HepG2 (cell line): ENCODE measurements at regions of chr2 and their contacts with region 1.

Region 1: GRCh38 chr2:64750817-64751285 is 97.1 kb upstream of the SERTAD2 start:
- DNase-seq: peak; percentile 99
- ATAC-seq: peak; percentile 92
- H3K4me3 ChIP-seq: peak overlapping the region; percentile 80 to 93 (median 89)
- H3K27ac ChIP-seq: peak overlapping the region; percentile 80
- H3K4me1 ChIP-seq: peaks cover 42% of the 10 kb centered on the region
- H3K27me3 ChIP-seq: no peaks in the 10 kb centered on the region; a peak in 1 of 5 replicates
- CTCF ChIP-seq: no peak; the same call in 1 of the 2 replicates
- EP300 ChIP-seq: peak in 1 of 2 experiments; percentile 9; a peak in 2 of 4 replicates
- POLR2A ChIP-seq: peak; percentile 73 to 92
- RAD21 ChIP-seq: peak; percentile 59; the same call in 1 of the 2 replicates

Region 2: DNA sequence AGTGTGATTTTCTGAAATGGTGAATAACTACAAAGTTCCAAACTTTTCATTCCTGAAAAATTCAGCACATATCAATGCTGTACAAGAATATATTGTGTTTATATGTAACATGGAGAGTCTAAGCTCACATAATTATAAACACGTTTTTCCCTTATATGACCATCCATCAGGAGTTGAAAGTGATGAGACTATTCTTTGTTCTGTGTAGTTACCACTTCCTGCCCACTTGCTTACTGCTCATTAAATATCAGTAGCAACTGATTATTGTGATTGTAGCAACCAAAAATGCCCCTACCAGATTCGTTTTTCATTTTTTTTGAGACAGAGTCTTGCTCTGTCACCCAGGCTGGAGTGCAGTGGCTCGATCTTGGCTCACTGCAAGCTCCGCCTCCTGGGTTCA is 1669.4 kb before region 1 on chr2:
- CTCF ChIA-PET with region 1: no interaction called
- POLR2A ChIA-PET with region 1: no interaction called
- in situ Hi-C with region 1: no loop called
- intact Hi-C with region 1: no loop called
- DNase-seq: no peak
- ATAC-seq: no peak
- H3K4me3 ChIP-seq: no peak overlapping the region
- H3K27ac ChIP-seq: no peak overlapping the region
- H3K4me1 ChIP-seq: peaks cover 36% of the 10 kb centered on the region
- H3K27me3 ChIP-seq: no peaks in the 10 kb centered on the region
- CTCF ChIP-seq: no peak
- EP300 ChIP-seq: no peak
- POLR2A ChIP-seq: no peak
- RAD21 ChIP-seq: no peak

Region 3: GRCh38 chr2:64711252-64711800 is 39.5 kb before region 1 on chr2:
- CTCF ChIA-PET with region 1: no interaction called
- POLR2A ChIA-PET with region 1: no interaction called
- in situ Hi-C with region 1: no loop called
- intact Hi-C with region 1: no loop called
- DNase-seq: no peak
- ATAC-seq: no peak
- H3K4me3 ChIP-seq: no peak overlapping the region
- H3K27ac ChIP-seq: no peak overlapping the region
- H3K4me1 ChIP-seq: peaks cover 6% of the 10 kb centered on the region
- H3K27me3 ChIP-seq: no peaks in the 10 kb centered on the region
- CTCF ChIP-seq: no peak
- EP300 ChIP-seq: no peak
- POLR2A ChIP-seq: no peak
- RAD21 ChIP-seq: no peak

Region 4: GRCh38 chr2:64730551-64731262 is 20.1 kb before region 1 on chr2:
- CTCF ChIA-PET with region 1: no interaction called
- POLR2A ChIA-PET with region 1: interaction called, 57 read pairs
- in situ Hi-C with region 1: no loop called
- intact Hi-C with region 1: loop called (anchors 1 kb)
- DNase-seq: peak; percentile 94
- ATAC-seq: peak; percentile 91
- H3K4me3 ChIP-seq: peak overlapping the region; percentile 10 to 59 (median 46)
- H3K27ac ChIP-seq: peak overlapping the region; percentile 83
- H3K4me1 ChIP-seq: peaks cover 76% of the 10 kb centered on the region
- H3K27me3 ChIP-seq: no peaks in the 10 kb centered on the region
- CTCF ChIP-seq: no peak
- EP300 ChIP-seq: peak; percentile 81 to 89; a peak in 3 of 4 replicates
- POLR2A ChIP-seq: peak in 1 of 2 experiments; percentile 64; a peak in 2 of 4 replicates
- RAD21 ChIP-seq: no peak

Region 5: DNA sequence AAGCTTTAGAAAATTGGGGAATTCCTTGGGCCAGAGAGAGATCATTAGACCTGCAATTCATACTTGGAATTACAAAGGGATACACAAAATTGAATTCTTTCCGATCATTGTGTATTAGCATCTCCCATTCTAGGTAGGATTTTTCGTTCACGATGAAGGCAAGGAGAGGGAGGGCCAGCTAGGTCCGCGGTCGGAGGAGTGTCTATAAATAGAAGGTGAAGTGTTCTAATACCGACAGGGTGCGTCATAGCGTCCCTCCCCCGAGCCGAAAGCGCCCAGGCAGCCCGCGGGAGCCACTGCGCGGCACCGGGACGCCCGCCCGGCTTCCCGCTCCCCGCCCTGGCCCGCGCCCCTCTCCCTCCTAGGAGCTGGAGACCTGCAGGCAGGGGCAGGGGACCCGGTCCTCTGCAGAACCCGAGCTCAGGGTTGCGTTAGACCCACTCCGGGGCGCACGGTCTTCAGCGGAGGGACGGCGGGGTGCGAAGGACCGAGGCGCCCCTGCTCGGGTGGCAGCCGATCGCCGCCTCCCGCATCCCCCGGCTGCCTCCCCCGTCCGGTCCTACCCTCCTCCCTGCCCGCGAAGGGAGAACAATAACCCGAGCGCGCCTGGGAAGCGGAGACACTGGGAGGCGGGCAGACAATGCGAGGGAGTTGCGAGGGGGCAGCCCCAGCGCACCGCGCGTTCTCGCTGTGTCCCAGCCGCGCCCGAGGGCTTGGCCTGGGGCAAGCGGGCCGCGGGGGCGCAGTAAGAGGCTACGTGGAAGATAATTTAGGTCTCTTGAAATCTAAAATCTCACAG is 17.0 kb after region 1 on chr2:
- CTCF ChIA-PET with region 1: no interaction called
- POLR2A ChIA-PET with region 1: interaction called, 15 read pairs
- in situ Hi-C with region 1: no loop called
- intact Hi-C with region 1: no loop called
- DNase-seq: peak; percentile 54
- ATAC-seq: peak; percentile 87
- H3K4me3 ChIP-seq: peak overlapping the region; percentile 58 to 75 (median 69)
- H3K27ac ChIP-seq: no peak overlapping the region
- H3K4me1 ChIP-seq: peaks cover 41% of the 10 kb centered on the region
- H3K27me3 ChIP-seq: peaks cover 2 to 66% of the 10 kb centered on the region in 2 experiments; a peak in 4 of 5 replicates
- CTCF ChIP-seq: peak; percentile 49
- EP300 ChIP-seq: no peak
- POLR2A ChIP-seq: no peak
- RAD21 ChIP-seq: no peak; the same call in 1 of the 2 replicates

Region 6: DNA sequence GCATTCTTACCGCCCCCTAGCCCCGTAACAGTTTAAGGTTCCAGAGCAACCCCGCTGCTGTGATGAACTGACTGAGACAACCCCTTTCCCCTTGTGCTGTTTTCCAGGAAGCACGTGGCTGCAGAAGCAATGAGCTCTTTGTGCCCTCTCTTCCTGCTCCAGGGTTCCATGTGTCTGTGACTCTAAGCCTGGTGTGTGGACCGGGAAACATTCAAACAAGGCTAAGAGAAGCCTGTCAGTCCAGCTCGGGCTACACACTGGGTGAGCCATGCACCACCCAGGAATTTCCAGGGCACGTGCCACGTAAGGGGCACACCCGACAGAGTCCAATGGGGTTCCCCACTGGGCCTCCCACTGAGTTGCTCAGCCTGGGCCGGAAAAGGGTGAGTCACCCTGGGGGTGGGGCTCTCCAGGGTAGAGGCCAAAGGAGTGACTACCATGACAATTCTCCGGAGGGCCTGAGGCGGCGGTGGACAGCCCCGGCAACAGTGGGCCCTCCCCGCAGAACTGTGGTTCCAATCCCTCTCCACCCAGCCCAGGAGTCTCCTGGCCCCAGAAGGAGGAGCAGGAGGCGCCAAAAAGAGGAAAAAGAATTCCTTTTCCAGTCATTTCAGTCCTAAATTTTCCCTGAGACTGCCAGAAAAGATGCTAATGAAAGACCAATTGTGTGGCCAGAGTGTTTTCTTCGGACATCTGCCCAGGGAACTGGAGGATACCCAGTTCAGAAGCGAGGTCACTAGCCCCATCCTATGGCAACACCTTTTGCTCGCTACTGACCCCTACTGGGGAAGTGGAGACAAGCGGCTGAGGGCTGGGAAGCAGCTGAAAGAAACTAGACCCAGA is 80.5 kb after region 1 on chr2:
- CTCF ChIA-PET with region 1: no interaction called
- POLR2A ChIA-PET with region 1: interaction called, 20 read pairs
- in situ Hi-C with region 1: no loop called
- intact Hi-C with region 1: loop called (anchors 1 kb)
- DNase-seq: peak; percentile 88
- ATAC-seq: peak; percentile 93
- H3K4me3 ChIP-seq: peak overlapping the region; percentile 6 to 49 (median 7); a peak in 4 of 6 replicates
- H3K27ac ChIP-seq: peak overlapping the region; percentile 55
- H3K4me1 ChIP-seq: peaks cover 52% of the 10 kb centered on the region
- H3K27me3 ChIP-seq: peaks cover 0 to 13% of the 10 kb centered on the region in 2 experiments; a peak in 1 of 5 replicates
- CTCF ChIP-seq: peak; percentile 89
- EP300 ChIP-seq: peak in 1 of 2 experiments; percentile 76; a peak in 2 of 4 replicates
- POLR2A ChIP-seq: no peak; a peak in 1 of 4 replicates
- RAD21 ChIP-seq: peak; percentile 53

Region 7: GRCh38 chr2:64859312-64860212 is 108.7 kb after region 1 on chr2:
- CTCF ChIA-PET with region 1: no interaction called
- POLR2A ChIA-PET with region 1: interaction called, 3 read pairs
- in situ Hi-C with region 1: no loop called
- intact Hi-C with region 1: loop called (anchors 5 kb)
- DNase-seq: no peak
- ATAC-seq: peak; percentile 76
- H3K4me3 ChIP-seq: peak overlapping the region; percentile 46 to 76 (median 57)
- H3K27ac ChIP-seq: no peak overlapping the region
- H3K4me1 ChIP-seq: peaks cover 52% of the 10 kb centered on the region
- H3K27me3 ChIP-seq: peaks cover 5 to 55% of the 10 kb centered on the region in 2 experiments
- CTCF ChIP-seq: no peak; the same call in 1 of the 2 replicates
- EP300 ChIP-seq: peak in 1 of 2 experiments; percentile 27; a peak in 1 of 4 replicates
- POLR2A ChIP-seq: no peak
- RAD21 ChIP-seq: no peak

Region 8: GRCh38 chr2:64995041-64995440 is 244.2 kb after region 1 on chr2:
- CTCF ChIA-PET with region 1: no interaction called
- POLR2A ChIA-PET with region 1: no interaction called
- in situ Hi-C with region 1: no loop called
- intact Hi-C with region 1: no loop called
- DNase-seq: no peak
- ATAC-seq: no peak
- H3K4me3 ChIP-seq: no peak overlapping the region
- H3K27ac ChIP-seq: no peak overlapping the region
- H3K4me1 ChIP-seq: peaks cover 56% of the 10 kb centered on the region
- H3K27me3 ChIP-seq: no peaks in the 10 kb centered on the region
- CTCF ChIP-seq: no peak
- EP300 ChIP-seq: no peak
- POLR2A ChIP-seq: no peak
- RAD21 ChIP-seq: no peak